ENCODE measurements at regions of chr9 and their contacts with region 1.

Region 1: GRCh38 chr9:133149126-133150107 is 14.3 kb downstream of the GBGT1 start:
- DNase-seq: peak; percentile 76
- H3K4me3 Mint-ChIP-seq: peak overlapping the region; percentile 72
- H3K27ac Mint-ChIP-seq: peak overlapping the region; percentile 69
- H3K4me1 Mint-ChIP-seq: peaks cover 24% of the 10 kb centered on the region
- H3K27me3 Mint-ChIP-seq: no peaks in the 10 kb centered on the region

Region 2: DNA sequence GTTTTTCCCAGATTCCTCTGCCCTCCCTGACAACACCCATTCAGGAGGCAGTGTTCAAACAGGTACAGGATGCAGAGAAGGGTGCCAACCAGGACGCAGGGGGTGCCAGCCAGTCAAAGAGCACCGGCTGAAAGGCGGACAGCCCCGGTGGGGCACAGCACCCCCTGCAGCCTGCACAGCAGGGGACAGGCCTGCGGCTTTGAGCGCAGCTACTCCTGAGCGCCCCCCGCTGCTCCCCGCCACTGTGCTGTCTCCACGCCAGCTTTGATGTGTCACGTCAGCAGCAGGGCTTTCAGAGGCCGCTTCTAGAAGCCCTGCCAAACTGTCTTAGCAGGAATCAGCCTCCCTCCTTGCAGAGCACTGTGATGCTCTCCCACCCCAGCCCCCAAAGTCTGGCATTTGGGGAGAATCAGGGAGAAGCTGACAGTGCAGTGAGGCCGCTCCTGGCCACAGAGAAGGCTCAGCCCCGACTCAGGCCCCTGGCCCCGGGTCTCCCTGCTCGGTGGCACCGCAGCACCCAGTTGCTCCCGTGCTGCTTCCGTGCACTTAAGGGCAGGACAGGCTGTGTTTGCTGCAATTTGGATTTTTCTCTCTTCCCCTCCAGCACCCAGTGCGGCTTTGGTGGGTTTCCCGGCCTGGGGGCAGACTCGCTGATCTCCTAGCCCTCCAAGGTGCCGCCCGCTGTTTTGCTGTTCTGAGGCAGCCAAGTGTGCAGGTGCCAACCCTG is 291.6 kb before region 1 on chr9:
- CTCF ChIA-PET with region 1: no interaction called
- intact Hi-C with region 1: no loop called
- DNase-seq: no peak
- H3K4me3 Mint-ChIP-seq: no peak overlapping the region
- H3K27ac Mint-ChIP-seq: no peak overlapping the region
- H3K4me1 Mint-ChIP-seq: peaks cover 1% of the 10 kb centered on the region
- H3K27me3 Mint-ChIP-seq: no peaks in the 10 kb centered on the region

Region 3: DNA sequence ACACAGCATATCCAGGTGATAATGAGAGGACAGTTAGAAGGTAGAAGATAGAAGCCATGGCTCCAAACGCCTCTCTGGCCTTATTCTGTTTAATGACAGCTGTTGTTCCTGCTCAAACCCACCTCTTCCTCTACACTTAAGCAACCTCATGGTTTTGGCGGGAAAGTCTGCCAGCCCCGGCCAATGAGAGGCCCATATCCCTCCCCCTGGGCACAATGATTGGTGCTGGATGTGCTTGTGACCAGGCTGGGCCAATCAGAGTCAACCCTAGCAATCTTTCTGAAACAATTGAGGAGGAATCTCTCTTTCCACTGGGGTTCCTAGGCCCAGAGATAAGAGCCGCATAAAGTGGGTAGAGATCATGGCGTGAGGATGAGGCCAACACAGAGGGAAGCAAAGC is 175.7 kb before region 1 on chr9:
- CTCF ChIA-PET with region 1: no interaction called
- intact Hi-C with region 1: loop called (anchors 5 kb)
- DNase-seq: no peak
- H3K4me3 Mint-ChIP-seq: no peak overlapping the region
- H3K27ac Mint-ChIP-seq: no peak overlapping the region
- H3K4me1 Mint-ChIP-seq: peaks cover 4% of the 10 kb centered on the region
- H3K27me3 Mint-ChIP-seq: peaks cover 7% of the 10 kb centered on the region

Region 4: GRCh38 chr9:133030317-133031129 is 118.9 kb before region 1 on chr9 and contains the start of gene GTF3C5:
- CTCF ChIA-PET with region 1: interaction called, 15 read pairs
- intact Hi-C with region 1: loop called (anchors 1 kb)
- DNase-seq: peak; percentile 95
- H3K4me3 Mint-ChIP-seq: peak within 1 kb of the TSS; percentile 98
- H3K27ac Mint-ChIP-seq: peak within 1 kb of the TSS; percentile 98
- H3K4me1 Mint-ChIP-seq: peaks cover 42% of the 10 kb centered on the region
- H3K27me3 Mint-ChIP-seq: no peaks in the 10 kb centered on the region
- total RNA-seq, gene GTF3C5: 102 to 108 TPM

Region 5: GRCh38 chr9:133058550-133059320 is 90.7 kb before region 1 on chr9:
- CTCF ChIA-PET with region 1: interaction called, 6 read pairs
- intact Hi-C with region 1: loop called (anchors 2 kb)
- DNase-seq: peak; percentile 30
- H3K4me3 Mint-ChIP-seq: no peak overlapping the region
- H3K27ac Mint-ChIP-seq: peak overlapping the region; percentile 71
- H3K4me1 Mint-ChIP-seq: peaks cover 55% of the 10 kb centered on the region
- H3K27me3 Mint-ChIP-seq: no peaks in the 10 kb centered on the region

Region 6: DNA sequence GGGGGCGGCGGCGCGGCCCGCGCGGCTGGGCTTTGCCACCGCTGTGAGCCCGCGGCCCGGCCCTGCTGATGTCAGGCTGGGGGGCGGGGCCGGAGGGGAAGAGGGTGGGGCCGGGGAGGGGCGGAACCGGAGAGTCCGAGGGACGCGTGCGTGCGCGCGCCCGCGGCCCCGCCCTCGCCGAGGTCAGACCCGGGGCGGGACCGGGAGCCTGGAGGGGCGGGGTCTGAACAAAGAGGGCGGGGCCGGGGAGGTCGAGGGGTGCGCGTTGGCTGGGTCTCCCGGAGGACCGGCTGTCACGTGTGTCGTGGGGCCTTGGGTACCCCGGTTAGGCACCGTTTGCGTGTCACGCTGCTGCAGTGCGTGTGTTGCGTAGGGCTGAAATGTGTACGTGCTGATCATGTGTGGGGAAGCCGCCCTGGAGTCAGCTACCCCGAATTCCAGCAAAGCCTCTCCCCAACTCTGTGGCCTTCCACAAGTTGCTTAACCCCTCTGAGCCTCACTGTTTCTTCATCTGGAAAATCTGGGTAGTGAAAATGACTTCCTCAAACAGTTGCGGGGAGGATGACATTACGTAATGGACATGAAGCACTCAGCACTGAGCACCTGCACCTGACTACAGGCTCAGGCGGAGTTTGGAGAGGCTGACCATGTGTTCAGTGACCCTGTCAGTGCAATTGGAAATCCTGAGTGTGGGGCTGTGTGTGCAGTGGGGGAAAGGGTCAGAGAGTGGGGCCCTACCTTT is 28.0 kb before region 1 on chr9 and contains the start of gene RALGDS:
- CTCF ChIA-PET with region 1: interaction called, 85 read pairs
- intact Hi-C with region 1: loop called (anchors 1 kb)
- DNase-seq: peak; percentile 91
- H3K4me3 Mint-ChIP-seq: peak within 1 kb of the TSS; percentile 78
- H3K27ac Mint-ChIP-seq: peak within 1 kb of the TSS; percentile 89
- H3K4me1 Mint-ChIP-seq: peaks cover 43% of the 10 kb centered on the region
- H3K27me3 Mint-ChIP-seq: no peaks in the 10 kb centered on the region
- total RNA-seq, gene RALGDS: 29.5 to 32.5 TPM

Region 7: DNA sequence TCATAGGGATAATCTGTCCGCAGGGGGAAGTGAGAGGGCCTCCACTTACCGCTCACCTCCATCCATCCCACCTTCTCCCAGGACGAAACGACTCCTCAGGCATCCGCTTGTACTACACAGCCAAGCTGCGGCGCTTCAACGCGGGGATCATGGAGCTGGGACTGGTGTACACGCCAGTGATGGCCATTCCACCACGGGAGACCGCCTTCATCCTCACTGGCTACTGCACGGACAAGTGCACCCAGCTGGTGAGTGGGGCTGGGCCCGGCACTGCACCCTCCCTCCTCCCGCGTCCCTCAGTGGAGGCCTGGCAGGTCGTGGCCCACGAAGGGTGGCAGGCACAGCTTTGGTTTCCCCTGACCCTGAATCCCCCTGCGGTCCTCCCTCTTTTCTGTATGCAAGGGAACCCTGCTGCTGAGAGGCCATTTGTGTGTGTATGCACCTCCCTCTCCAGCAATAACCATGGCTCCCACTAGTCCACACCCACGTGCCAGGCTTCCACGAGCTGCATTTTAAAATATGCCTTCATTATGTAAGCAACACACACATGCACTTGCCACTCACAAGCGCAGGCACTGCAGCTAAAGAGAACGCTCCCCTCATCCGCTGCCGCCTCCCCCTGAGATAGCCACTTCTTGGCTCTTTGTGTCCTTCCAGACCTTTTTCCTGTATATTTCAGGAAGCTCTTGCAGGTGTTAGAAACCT is 498.5 kb after region 1 on chr9:
- CTCF ChIA-PET with region 1: no interaction called
- intact Hi-C with region 1: no loop called
- DNase-seq: no peak
- H3K4me3 Mint-ChIP-seq: no peak overlapping the region
- H3K27ac Mint-ChIP-seq: no peak overlapping the region
- H3K4me1 Mint-ChIP-seq: no peaks in the 10 kb centered on the region
- H3K27me3 Mint-ChIP-seq: no peaks in the 10 kb centered on the region

Region 8: GRCh38 chr9:134067904-134068743 is 918.7 kb after region 1 on chr9 and contains the start of gene BRD3:
- CTCF ChIA-PET with region 1: no interaction called
- intact Hi-C with region 1: loop called (anchors 10 kb)
- DNase-seq: peak; percentile 80
- H3K4me3 Mint-ChIP-seq: peak within 1 kb of the TSS; percentile 87
- H3K27ac Mint-ChIP-seq: peak within 1 kb of the TSS; percentile 80
- H3K4me1 Mint-ChIP-seq: peaks cover 29% of the 10 kb centered on the region
- H3K27me3 Mint-ChIP-seq: peaks cover 13% of the 10 kb centered on the region
- total RNA-seq, gene BRD3: 34.2 to 36.6 TPM